Head of caudate nucleus (tissue), 42 donors: ENCODE measurements at regions of chr17 and their contacts with region 1.

Region 1: DNA sequence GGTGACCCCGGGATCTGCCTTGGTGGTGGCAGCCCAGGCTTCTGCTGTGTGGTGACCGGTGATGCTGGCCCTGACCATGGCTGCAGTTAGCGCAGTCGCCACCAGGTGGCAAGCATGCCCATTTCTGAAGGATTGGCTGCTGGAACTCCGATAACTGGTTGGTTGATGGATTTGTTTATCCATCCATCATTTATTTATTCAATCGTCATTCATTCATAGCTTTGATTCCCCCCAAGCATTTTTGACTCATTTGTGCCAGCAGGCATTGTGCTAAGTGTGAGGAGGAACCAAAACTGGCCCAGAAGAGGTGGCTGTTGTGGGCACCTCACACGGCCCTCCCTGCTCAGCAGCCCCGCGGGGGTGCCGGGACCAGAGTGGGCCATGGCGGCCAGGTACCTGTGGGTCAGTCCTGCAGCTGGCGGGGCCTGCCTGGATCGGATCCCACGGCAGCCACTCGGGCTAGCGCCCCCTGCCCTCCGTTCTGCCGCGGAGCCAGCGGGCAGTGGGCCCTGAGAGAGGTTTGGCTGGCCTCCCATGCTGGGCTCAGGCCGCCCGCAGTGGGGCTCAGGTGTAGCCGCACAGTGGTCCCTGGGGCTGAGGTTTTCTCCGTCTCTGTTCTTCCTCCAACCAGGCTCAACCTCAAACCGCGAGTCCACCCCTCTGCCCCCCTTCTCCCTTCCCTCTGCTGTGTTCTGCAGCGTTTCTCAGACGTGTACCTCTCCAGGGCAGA is 28.8 kb upstream of the ITGA3 start:
- DNase-seq: peak; percentile 44 to 93 (median 86)

Region 2: GRCh38 chr17:49861150-49861892 is 165.7 kb before region 1 on chr17:
- intact Hi-C with region 1: no loop called
- DNase-seq: peak in 38 of 42 donors; percentile 7 to 79 (median 53)

Region 3: GRCh38 chr17:50087246-50087911 is 60.3 kb after region 1 on chr17:
- intact Hi-C with region 1: loop called (anchors 5 kb)
- DNase-seq: peak in 37 of 42 donors; percentile 32 to 83 (median 63)